ENCODE measurements at regions of chr1 and their contacts with region 1.

Region 1: DNA sequence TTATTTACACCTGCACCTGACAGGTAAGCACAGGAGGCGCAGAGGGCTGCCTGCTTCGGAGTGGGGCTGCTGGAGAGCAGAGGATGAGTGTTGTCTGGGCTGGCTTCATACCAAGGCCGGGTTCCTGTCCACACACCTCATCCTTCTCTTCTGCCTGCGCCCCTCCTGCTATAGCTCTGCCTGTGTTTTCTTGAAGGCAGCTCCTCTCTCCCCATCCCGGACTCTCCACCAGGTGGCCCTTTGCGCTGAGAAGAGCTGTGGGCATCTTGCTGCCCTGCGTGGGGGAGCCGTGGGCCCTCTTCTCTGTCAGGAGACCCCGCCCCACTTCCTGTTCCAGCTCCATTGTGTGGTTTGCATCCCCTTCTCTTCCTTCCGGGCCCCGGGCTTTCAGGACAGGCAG is 35.0 kb downstream of the ARHGEF10L start:
- DNase-seq: peak; percentile 57
- H3K4me3 ChIP-seq: no peak overlapping the region
- H3K27ac ChIP-seq: no peak overlapping the region
- H3K4me1 ChIP-seq: peaks cover 6 to 29% of the 10 kb centered on the region in 2 experiments; a peak in 2 of 4 replicates
- H3K27me3 ChIP-seq: no peaks in the 10 kb centered on the region
- CTCF ChIP-seq: no peak; the same call in 1 of the 2 replicates
- EP300 ChIP-seq: no peak
- RAD21 ChIP-seq: peak; percentile 38

Region 2: DNA sequence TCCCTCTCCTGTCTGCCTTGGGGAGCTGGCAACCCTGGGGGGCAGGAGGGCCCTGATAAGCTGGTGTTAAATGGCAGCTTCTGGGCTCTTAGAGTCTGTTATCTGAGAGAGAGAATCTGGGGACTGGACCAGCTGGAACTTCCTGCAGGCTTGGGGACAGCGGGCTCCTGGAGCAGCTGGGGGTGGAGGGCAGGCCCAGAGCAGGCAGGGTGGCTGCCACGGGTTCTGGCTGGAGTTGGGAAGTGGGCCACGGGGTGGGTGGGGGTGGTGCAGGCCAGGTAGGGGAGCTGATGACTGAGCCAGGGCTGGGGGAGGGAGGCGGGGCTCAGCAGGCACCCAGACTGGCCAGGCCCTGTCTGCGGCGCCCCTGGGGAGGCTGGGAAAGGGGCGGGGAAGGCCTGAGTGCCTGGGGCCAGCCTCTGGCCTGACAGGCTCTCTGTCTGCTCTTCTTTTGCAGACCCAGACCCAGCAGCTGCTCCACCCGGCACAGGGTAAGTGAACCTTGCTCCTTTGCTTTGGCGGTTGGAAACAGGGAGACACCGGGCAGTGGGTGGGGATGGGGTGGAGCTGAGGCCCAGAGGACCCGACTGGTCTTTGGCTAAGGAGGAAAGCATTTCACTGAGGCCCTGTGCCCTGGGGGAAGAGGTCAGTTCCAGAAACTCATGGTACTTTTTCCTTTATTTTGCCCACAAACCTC is 13.6 kb after region 1 on chr1:
- CTCF ChIA-PET with region 1: interaction called, 15 read pairs
- POLR2A ChIA-PET with region 1: interaction called, 5 read pairs
- DNase-seq: peak; percentile 89
- H3K4me3 ChIP-seq: peak overlapping the region in 1 of 2 experiments; percentile 32; a peak in 2 of 4 replicates
- H3K27ac ChIP-seq: peak overlapping the region; percentile 82 to 90
- H3K4me1 ChIP-seq: peaks cover 18 to 66% of the 10 kb centered on the region in 2 experiments
- H3K27me3 ChIP-seq: no peaks in the 10 kb centered on the region
- CTCF ChIP-seq: no peak
- EP300 ChIP-seq: peak in 1 of 2 experiments; percentile 69; a peak in 2 of 4 replicates
- RAD21 ChIP-seq: no peak

Measured in SK-N-SH (cell line).